OCI-LY7 (cell line): ENCODE measurements at regions of chr17 and their contacts with region 1.

Region 1: DNA sequence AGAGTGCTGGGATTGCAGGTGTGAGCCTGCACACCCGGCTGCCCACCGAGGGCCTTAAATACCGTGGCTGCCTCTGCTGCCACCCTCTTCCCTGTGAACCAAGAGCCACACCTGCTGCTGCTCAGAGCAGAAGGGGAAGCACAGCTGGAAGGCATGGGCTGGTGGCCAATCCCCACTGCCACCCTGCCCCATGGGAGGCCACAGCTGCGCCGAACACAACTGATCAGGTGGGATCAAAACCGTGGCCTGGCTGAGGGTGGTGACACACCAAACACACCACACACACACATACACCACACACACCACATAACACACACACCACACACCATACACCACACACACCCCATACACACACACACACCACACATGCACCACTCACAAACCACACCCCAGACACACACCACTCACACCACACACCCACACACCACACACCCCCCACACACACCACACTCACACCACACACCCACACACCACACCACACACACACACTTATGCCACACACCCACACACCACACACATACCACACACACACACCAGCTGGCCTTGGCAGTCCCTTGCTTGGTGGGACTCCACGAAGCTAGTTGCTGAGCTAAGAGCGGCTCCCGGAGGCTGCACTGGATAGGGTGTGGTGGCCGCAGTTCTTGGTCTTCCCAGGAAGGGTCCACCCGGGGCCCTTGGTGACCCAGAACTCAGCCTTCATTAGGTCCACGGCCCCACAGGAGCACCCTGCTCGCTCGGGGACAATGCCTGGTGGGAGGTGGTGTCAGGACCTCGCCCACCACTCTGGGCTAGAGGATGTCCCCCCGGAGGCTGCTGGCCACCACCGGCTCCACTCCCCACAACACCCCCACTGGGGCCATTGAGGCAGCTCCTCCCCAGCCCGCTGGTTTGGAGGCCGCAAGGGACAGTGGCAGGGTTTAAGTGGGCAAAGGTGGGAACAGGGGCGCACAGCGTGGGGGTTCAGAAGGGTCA is 14.9 kb downstream of the CEP131 start:
- DNase-seq: peak; percentile 94
- H3K4me3 ChIP-seq: no peak overlapping the region
- H3K27ac ChIP-seq: peak overlapping the region; percentile 56
- H3K4me1 ChIP-seq: peaks cover 12% of the 10 kb centered on the region
- CTCF ChIP-seq: no peak

Region 2: GRCh38 chr17:81222906-81223761 is 15.2 kb after region 1 on chr17 and contains the start of gene CEP131:
- CTCF ChIA-PET with region 1: no interaction called
- POLR2A ChIA-PET with region 1: interaction called, 3 read pairs
- intact Hi-C with region 1: loop called (anchors 1 kb)
- DNase-seq: peak; percentile 100
- H3K4me3 ChIP-seq: peak within 1 kb of the TSS; percentile 79
- H3K27ac ChIP-seq: no peak within 1 kb of the TSS
- H3K4me1 ChIP-seq: peaks cover 30% of the 10 kb centered on the region
- CTCF ChIP-seq: no peak
- total RNA-seq, gene CEP131: 32.9 and 35.0 TPM in 2 replicates